Caco-2 (cell line): ENCODE measurements at regions of chr3 and their contacts with region 1.

Region 1: DNA sequence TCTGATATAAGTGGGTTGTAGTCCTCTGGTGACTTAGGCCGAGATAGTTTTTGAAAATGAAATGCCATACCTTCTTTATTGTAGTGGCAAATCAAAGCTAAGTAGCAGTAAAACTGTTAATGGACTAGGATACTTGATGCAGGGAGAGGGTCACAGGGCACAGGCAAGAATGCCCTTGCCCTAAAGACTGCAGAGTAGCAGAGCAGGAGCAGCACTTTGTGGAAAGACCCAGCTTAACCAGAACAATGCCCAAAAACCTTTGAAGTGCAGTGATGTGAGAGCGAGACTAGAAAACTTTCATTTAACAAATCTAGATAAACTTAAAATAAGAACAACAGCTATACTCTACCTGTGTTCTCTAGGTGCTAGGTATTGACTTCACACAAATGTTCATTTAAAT is 121.9 kb downstream of the MBNL1 start:
- DNase-seq: no peak
- H3K4me3 ChIP-seq: no peak overlapping the region
- H3K4me3 Mint-ChIP-seq: no peak overlapping the region
- H3K27ac Mint-ChIP-seq: peak overlapping the region; percentile 68
- H3K4me1 ChIP-seq: peaks cover 62% of the 10 kb centered on the region
- H3K4me1 Mint-ChIP-seq: peaks cover 20% of the 10 kb centered on the region
- H3K27me3 ChIP-seq: no peaks in the 10 kb centered on the region
- H3K27me3 Mint-ChIP-seq: no peaks in the 10 kb centered on the region
- CTCF ChIP-seq: no peak

Region 2: DNA sequence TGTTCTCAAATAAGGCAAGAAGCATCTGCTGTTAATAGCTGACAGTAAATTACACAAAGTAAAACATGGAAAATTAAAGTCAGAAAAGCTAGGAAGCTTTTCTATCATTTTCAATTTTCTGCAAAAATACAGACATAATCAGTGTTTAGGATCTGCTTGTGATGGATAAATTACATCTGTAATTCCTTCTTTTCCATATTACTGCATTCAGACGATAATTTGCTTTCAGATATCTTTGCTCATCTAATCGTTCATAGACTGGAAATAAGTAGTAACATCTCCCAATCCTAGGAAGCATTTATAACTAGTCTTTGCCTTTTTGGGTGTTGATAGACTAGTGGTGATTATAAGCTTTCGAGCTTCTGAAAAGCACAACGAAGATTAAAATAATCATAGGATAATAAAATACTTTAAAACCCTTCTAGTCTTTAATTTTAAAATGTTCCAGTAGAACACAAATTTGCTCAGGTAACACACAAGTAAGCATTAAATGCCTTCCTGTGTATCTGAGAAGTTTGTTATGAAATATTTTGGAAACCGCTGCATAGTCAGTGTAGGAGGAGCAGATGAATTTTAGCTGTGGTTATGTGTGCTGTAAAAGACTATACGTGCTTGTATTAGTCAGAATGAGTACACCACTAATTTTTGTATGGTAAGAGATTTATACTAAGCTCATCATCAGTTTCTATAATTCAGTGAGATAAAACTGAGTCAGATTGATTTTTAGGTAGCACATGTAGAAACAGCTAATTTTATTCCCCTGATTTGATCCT is 80.9 kb before region 1 on chr3:
- CTCF ChIA-PET with region 1: interaction called, 3 read pairs
- POLR2A ChIA-PET with region 1: no interaction called
- intact Hi-C with region 1: loop called (anchors 5 kb)
- DNase-seq: no peak
- H3K4me3 ChIP-seq: no peak overlapping the region
- H3K4me3 Mint-ChIP-seq: no peak overlapping the region
- H3K27ac Mint-ChIP-seq: no peak overlapping the region
- H3K4me1 ChIP-seq: peaks cover 59% of the 10 kb centered on the region
- H3K4me1 Mint-ChIP-seq: peaks cover 17% of the 10 kb centered on the region
- H3K27me3 ChIP-seq: no peaks in the 10 kb centered on the region
- H3K27me3 Mint-ChIP-seq: no peaks in the 10 kb centered on the region
- CTCF ChIP-seq: no peak

Region 3: GRCh38 chr3:152356870-152357276 is 33.8 kb before region 1 on chr3:
- CTCF ChIA-PET with region 1: no interaction called
- POLR2A ChIA-PET with region 1: no interaction called
- intact Hi-C with region 1: no loop called
- DNase-seq: no peak
- H3K4me3 ChIP-seq: no peak overlapping the region
- H3K4me3 Mint-ChIP-seq: no peak overlapping the region
- H3K27ac Mint-ChIP-seq: no peak overlapping the region
- H3K4me1 ChIP-seq: no peaks in the 10 kb centered on the region
- H3K4me1 Mint-ChIP-seq: peaks cover 17% of the 10 kb centered on the region
- H3K27me3 ChIP-seq: no peaks in the 10 kb centered on the region
- H3K27me3 Mint-ChIP-seq: no peaks in the 10 kb centered on the region
- CTCF ChIP-seq: no peak

Region 4: DNA sequence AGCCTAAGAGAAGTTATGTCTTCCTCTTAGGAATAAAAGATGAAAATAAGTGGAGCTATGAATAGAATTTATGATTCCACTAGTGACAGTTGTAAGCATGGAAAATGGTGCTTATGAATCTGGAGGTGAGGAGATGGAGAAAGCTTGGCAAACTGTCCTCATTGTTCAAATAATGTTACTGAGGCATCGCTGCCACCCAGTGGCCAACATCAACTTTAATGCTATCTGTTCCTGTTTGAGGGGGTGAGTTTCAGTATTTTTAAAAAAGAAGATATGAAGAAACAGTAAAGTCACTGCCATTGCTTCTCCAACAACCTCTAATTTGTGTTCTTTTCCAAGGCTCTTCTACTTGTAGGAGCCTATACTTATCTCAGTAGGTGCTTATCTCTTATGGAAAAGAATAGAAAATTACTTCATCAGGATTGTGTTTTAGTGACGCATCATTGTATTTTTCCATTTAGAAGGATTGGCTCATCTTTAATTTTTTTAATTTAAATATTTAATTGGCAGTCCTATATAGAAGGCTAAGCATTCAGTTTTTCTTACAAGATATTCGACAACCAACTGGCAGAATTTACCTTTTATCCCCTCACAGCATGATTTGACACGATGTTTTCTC is 183.9 kb after region 1 on chr3:
- CTCF ChIA-PET with region 1: no interaction called
- POLR2A ChIA-PET with region 1: no interaction called
- intact Hi-C with region 1: no loop called
- DNase-seq: peak in 1 of 2 experiments; percentile 44
- H3K4me3 ChIP-seq: no peak overlapping the region
- H3K4me3 Mint-ChIP-seq: no peak overlapping the region
- H3K27ac Mint-ChIP-seq: no peak overlapping the region
- H3K4me1 ChIP-seq: no peaks in the 10 kb centered on the region
- H3K4me1 Mint-ChIP-seq: no peaks in the 10 kb centered on the region
- H3K27me3 ChIP-seq: no peaks in the 10 kb centered on the region
- H3K27me3 Mint-ChIP-seq: peaks cover 3% of the 10 kb centered on the region
- CTCF ChIP-seq: peak; percentile 48 to 63